ENCODE measurements at regions of chr17 and their contacts with region 1.

Region 1: GRCh38 chr17:36534840-36535668 is at the starts of genes MYO19 and PIGW:
- DNase-seq: peak; percentile 91 to 96 (median 92)
- ATAC-seq: peak; percentile 92
- H3K4me3 ChIP-seq: peak within 1 kb of the TSS; percentile 57
- H3K27ac ChIP-seq: peak within 1 kb of the TSS; percentile 100
- H3K4me1 ChIP-seq: peaks cover 21 to 30% of the 10 kb centered on the region in 2 experiments
- H3K27me3 ChIP-seq: no peaks in the 10 kb centered on the region
- CTCF ChIP-seq: peak; percentile 15 to 30 (median 26); a peak in 1 of 6 replicates
- EP300 ChIP-seq: no peak; the same call in 1 of the 2 replicates
- POLR2A ChIP-seq: peak; percentile 93
- RAD21 ChIP-seq: 0 out of 4 replicates have a peak, but pooled peaks of 1 of the 2 experiments have one; percentile 4
- polyA plus RNA-seq, gene MYO19: 21.6 to 24.5 TPM
- polyA plus RNA-seq, gene PIGW: 9.5 to 15.4 TPM

Region 2: GRCh38 chr17:36514856-36515255 is 20.2 kb before region 1 on chr17:
- CTCF ChIA-PET with region 1: no interaction called
- POLR2A ChIA-PET with region 1: interaction called, 13 read pairs
- in situ Hi-C with region 1: no loop called
- intact Hi-C with region 1: no loop called
- DNase-seq: no peak
- ATAC-seq: no peak
- H3K4me3 ChIP-seq: no peak overlapping the region
- H3K27ac ChIP-seq: no peak overlapping the region
- H3K4me1 ChIP-seq: peaks cover 0 to 3% of the 10 kb centered on the region in 2 experiments; a peak in 1 of 5 replicates
- H3K27me3 ChIP-seq: no peaks in the 10 kb centered on the region
- CTCF ChIP-seq: no peak
- EP300 ChIP-seq: no peak
- POLR2A ChIP-seq: no peak
- RAD21 ChIP-seq: no peak

Region 3: GRCh38 chr17:36524428-36524876 is 10.6 kb before region 1 on chr17:
- CTCF ChIA-PET with region 1: no interaction called
- POLR2A ChIA-PET with region 1: interaction called, 26 read pairs
- in situ Hi-C with region 1: no loop called
- intact Hi-C with region 1: no loop called
- DNase-seq: no peak
- ATAC-seq: no peak
- H3K4me3 ChIP-seq: no peak overlapping the region
- H3K27ac ChIP-seq: no peak overlapping the region
- H3K4me1 ChIP-seq: peaks cover 0 to 10% of the 10 kb centered on the region in 2 experiments; a peak in 2 of 5 replicates
- H3K27me3 ChIP-seq: no peaks in the 10 kb centered on the region
- CTCF ChIP-seq: no peak
- EP300 ChIP-seq: no peak
- POLR2A ChIP-seq: no peak
- RAD21 ChIP-seq: no peak

Region 4: GRCh38 chr17:36545465-36546417 is 10.7 kb after region 1 on chr17:
- CTCF ChIA-PET with region 1: no interaction called
- POLR2A ChIA-PET with region 1: interaction called, 72 read pairs
- in situ Hi-C with region 1: no loop called
- intact Hi-C with region 1: no loop called
- DNase-seq: peak; percentile 93 to 98 (median 96)
- ATAC-seq: peak; percentile 88
- H3K4me3 ChIP-seq: peak overlapping the region; percentile 85
- H3K27ac ChIP-seq: peak overlapping the region; percentile 90
- H3K4me1 ChIP-seq: peaks cover 13 to 20% of the 10 kb centered on the region in 2 experiments; a peak in 4 of 5 replicates
- H3K27me3 ChIP-seq: no peaks in the 10 kb centered on the region
- CTCF ChIP-seq: 0 out of 6 replicates have a peak, but pooled peaks of 1 of the 3 experiments have one; percentile 18
- EP300 ChIP-seq: peak; percentile 99
- POLR2A ChIP-seq: 0 out of 2 replicates have a peak, but pooled peaks have one; percentile 10
- RAD21 ChIP-seq: no peak

Region 5: DNA sequence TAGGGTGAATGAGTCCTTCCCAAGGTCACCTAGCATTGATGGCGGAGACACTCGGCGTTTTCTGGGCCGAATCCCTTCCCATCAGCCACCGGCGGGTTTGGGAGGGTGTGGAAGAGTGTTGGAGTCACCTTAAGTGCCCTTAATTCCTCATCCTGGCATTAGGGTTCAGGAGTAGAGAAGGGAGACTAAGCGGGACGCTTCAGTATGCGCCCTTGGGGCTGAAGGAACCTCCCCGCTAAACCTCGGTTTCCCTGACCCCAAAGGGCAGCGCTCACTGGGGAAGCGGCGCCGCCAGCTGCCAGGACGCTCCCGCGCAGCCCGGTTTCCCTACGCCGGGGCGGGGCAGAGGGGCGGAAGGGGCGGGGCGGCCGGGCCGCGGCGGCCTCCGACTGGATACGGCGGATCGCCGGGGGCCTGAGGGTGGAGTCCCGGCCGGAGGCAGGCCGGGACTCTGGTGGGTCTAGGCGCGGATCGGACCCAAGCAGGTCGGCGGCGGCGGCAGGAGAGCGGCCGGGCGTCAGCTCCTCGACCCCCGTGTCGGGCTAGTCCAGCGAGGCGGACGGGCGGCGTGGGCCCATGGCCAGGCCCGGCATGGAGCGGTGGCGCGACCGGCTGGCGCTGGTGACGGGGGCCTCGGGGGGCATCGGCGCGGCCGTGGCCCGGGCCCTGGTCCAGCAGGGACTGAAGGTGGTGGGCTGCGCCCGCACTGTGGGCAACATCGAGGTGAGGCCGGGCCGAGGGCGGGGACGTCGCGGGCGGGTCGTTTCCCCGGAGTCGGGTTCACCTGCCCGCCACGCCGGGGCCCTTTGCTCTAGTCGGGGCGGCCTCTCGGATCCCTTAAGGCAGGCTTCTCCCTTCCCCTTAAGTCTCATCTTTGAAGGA is 56.6 kb after region 1 on chr17 and contains the start of gene DHRS11:
- CTCF ChIA-PET with region 1: no interaction called
- POLR2A ChIA-PET with region 1: interaction called, 7 read pairs
- in situ Hi-C with region 1: no loop called
- intact Hi-C with region 1: loop called (anchors 2 kb)
- DNase-seq: peak; percentile 89 to 95 (median 94)
- ATAC-seq: peak; percentile 94
- H3K4me3 ChIP-seq: peak within 1 kb of the TSS; percentile 79
- H3K27ac ChIP-seq: peak within 1 kb of the TSS; percentile 73
- H3K4me1 ChIP-seq: peaks cover 44 to 53% of the 10 kb centered on the region in 2 experiments
- H3K27me3 ChIP-seq: no peaks in the 10 kb centered on the region
- CTCF ChIP-seq: peak in 1 of 3 experiments; percentile 19; a peak in 1 of 6 replicates
- EP300 ChIP-seq: no peak
- POLR2A ChIP-seq: peak; percentile 72
- RAD21 ChIP-seq: no peak
- polyA plus RNA-seq, gene DHRS11: 15.2 to 23.0 TPM

Region 6: GRCh38 chr17:36601303-36602029 is 66.4 kb after region 1 on chr17 and contains the start of gene MRM1:
- CTCF ChIA-PET with region 1: no interaction called
- POLR2A ChIA-PET with region 1: interaction called, 4 read pairs
- in situ Hi-C with region 1: no loop called
- intact Hi-C with region 1: loop called (anchors 2 kb)
- DNase-seq: peak; percentile 94 to 97 (median 94)
- ATAC-seq: peak; percentile 85
- H3K4me3 ChIP-seq: peak within 1 kb of the TSS; percentile 82
- H3K27ac ChIP-seq: peak within 1 kb of the TSS; percentile 98
- H3K4me1 ChIP-seq: peaks cover 57 to 66% of the 10 kb centered on the region in 2 experiments
- H3K27me3 ChIP-seq: no peaks in the 10 kb centered on the region
- CTCF ChIP-seq: peak; percentile 22 to 34 (median 30); a peak in 3 of 6 replicates
- EP300 ChIP-seq: no peak; the same call in 1 of the 2 replicates
- POLR2A ChIP-seq: peak; percentile 87
- RAD21 ChIP-seq: no peak
- polyA plus RNA-seq, gene MRM1: 0.61 to 1.4 TPM

Measured in K562 (cell line).